Mammary epithelial cell (primary cell): ENCODE measurements at regions of chr19 and their contacts with region 1.

Region 1: DNA sequence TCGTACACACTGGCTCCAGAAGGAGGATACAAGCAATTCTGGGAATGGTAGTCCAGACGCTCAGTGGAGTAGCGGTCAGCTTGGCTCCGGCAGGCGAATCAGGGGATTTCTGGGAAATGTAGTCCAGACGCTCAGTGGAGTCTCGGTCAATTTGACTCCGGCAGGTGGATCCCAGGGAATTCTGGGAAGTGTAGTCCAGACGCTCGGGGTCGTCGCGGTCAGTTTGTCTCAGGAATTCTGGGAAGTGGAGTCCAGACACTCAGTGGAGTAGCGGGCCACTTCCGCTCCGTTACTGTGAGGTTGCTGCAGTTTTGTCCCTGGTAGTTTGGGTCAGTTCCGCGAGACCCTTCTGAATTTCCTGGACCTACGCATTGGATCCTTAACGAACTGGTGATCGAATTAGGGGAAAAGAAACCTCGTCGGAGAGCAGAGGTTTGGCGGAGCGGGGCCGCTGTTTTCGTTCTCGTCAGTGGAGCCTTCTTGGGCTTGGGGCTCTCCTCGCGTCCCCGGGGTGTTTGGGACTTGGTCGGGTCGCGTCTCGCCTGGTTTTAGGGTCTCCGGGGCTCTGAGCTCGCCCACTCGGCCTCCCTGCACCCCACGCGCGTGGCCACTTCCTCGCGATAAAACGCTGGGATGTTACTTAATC is at the start of gene ZNF225:
- DNase-seq: peak; percentile 98
- H3K4me3 ChIP-seq: peak within 1 kb of the TSS; percentile 59 to 68 (median 68)
- H3K27ac ChIP-seq: no peak within 1 kb of the TSS
- H3K4me1 ChIP-seq: peaks cover 8% of the 10 kb centered on the region
- H3K27me3 ChIP-seq: no peaks in the 10 kb centered on the region
- CTCF ChIP-seq: no peak
- total RNA-seq, gene ZNF225: 3.7 to 4.5 TPM

Region 2: GRCh38 chr19:44025217-44025936 is 87.9 kb before region 1 on chr19 and contains the start of gene ZNF222:
- CTCF ChIA-PET with region 1: no interaction called
- dilution Hi-C with region 1: loop called (anchors 5 kb)
- in situ Hi-C with region 1: no loop called
- intact Hi-C with region 1: no loop called
- DNase-seq: peak; percentile 84
- H3K4me3 ChIP-seq: peak within 1 kb of the TSS; percentile 59 to 76 (median 74)
- H3K27ac ChIP-seq: peak within 1 kb of the TSS; percentile 30
- H3K4me1 ChIP-seq: no peaks in the 10 kb centered on the region
- H3K27me3 ChIP-seq: no peaks in the 10 kb centered on the region
- CTCF ChIP-seq: no peak
- total RNA-seq, gene ZNF222: 3.9 to 5.3 TPM

Region 3: GRCh38 chr19:44141191-44142058 is 28.2 kb after region 1 on chr19 and contains the start of gene ZNF234:
- CTCF ChIA-PET with region 1: no interaction called
- dilution Hi-C with region 1: no loop called
- in situ Hi-C with region 1: no loop called
- intact Hi-C with region 1: loop called (anchors 1 kb)
- DNase-seq: peak; percentile 71
- H3K4me3 ChIP-seq: peak within 1 kb of the TSS; percentile 66 to 80 (median 68)
- H3K27ac ChIP-seq: peak within 1 kb of the TSS; percentile 28
- H3K4me1 ChIP-seq: peaks cover 7% of the 10 kb centered on the region
- H3K27me3 ChIP-seq: no peaks in the 10 kb centered on the region
- CTCF ChIP-seq: no peak
- total RNA-seq, gene ZNF234: 8.9 to 10.5 TPM

Region 4: DNA sequence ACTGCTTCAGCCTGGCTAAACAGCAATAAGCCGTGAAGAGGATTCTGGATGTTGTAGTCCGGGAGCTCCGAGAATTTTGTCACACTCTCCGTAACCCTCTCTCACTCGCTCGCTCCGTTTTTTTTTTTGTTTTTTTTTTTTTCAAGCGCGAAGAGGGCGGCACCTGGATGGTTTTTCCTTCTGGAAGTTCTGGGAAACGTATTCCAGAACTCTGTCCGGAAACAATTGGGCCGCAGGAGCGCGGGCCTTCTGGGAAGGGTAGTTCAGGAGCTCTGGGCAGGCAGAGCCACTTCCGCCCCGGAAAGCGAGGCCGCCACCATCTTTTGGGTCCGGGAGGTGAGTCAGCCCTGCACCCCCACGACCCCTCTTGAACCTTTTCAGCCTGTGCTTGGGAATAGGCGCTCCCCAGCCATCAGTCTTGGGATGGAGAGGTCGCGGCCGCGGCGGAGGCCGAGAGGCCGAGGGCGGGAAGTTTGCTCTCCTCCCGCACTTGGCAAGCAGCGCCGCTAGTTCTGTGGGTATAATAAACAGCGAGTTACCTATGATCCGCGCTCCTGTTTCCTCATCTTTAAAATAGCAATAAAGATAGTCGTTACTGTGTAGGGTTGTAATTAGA is 99.1 kb after region 1 on chr19 and contains the start of gene ZNF227:
- CTCF ChIA-PET with region 1: no interaction called
- dilution Hi-C with region 1: no loop called
- in situ Hi-C with region 1: no loop called
- intact Hi-C with region 1: loop called (anchors 5 kb)
- DNase-seq: peak; percentile 96
- H3K4me3 ChIP-seq: peak within 1 kb of the TSS; percentile 72 to 95 (median 95)
- H3K27ac ChIP-seq: peak within 1 kb of the TSS; percentile 57
- H3K4me1 ChIP-seq: no peaks in the 10 kb centered on the region
- H3K27me3 ChIP-seq: no peaks in the 10 kb centered on the region
- CTCF ChIP-seq: no peak
- total RNA-seq, gene ZNF227: 11.1 to 12.8 TPM

Region 5: GRCh38 chr19:44356383-44357111 is 243.3 kb after region 1 on chr19 and contains the start of gene ZNF112:
- CTCF ChIA-PET with region 1: no interaction called
- dilution Hi-C with region 1: no loop called
- in situ Hi-C with region 1: no loop called
- intact Hi-C with region 1: loop called (anchors 1 kb)
- DNase-seq: peak; percentile 97
- H3K4me3 ChIP-seq: peak within 1 kb of the TSS; percentile 66 to 86 (median 69)
- H3K27ac ChIP-seq: peak within 1 kb of the TSS; percentile 37
- H3K4me1 ChIP-seq: peaks cover 2% of the 10 kb centered on the region
- H3K27me3 ChIP-seq: no peaks in the 10 kb centered on the region
- CTCF ChIP-seq: no peak
- total RNA-seq, gene ZNF112: 4.7 to 6.5 TPM